AG04449 (cell line): ENCODE measurements at regions of chr12 and their contacts with region 1.

Region 1: GRCh38 chr12:76621582-76622024 is 62.0 kb upstream of the OSBPL8 start:
- DNase-seq: no peak
- H3K4me3 ChIP-seq: no peak overlapping the region
- CTCF ChIP-seq: peak; percentile 75

Region 2: DNA sequence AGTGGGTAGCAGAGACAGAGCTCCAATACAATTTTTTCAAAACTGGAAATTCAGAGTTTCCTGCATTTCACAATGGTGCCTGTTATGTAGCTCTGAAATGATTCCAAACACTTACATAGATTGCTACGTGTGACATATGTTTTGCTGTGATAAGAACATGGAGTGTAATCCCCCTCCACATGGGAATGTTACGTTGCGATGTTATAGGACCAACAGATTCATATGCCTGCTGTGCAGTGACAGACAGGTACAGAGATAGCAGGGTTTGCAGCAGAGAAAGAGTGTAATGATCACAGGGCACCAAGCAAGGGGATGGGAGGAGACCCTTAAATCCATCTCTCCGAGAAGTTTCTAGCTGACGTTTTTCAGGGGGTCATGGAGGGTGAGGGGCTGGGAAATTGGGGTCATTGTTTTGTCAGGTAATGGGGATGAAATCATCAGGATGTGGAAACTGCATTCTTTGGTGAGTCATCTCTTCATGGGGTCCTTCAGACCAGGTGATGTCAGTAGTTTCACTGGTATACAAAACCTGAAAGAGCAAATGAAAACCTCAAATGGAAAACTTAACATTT is 14.6 kb after region 1 on chr12:
- CTCF ChIA-PET with region 1: interaction called, 13 read pairs
- POLR2A ChIA-PET with region 1: no interaction called
- DNase-seq: no peak
- H3K4me3 ChIP-seq: no peak overlapping the region
- CTCF ChIP-seq: no peak

Region 3: DNA sequence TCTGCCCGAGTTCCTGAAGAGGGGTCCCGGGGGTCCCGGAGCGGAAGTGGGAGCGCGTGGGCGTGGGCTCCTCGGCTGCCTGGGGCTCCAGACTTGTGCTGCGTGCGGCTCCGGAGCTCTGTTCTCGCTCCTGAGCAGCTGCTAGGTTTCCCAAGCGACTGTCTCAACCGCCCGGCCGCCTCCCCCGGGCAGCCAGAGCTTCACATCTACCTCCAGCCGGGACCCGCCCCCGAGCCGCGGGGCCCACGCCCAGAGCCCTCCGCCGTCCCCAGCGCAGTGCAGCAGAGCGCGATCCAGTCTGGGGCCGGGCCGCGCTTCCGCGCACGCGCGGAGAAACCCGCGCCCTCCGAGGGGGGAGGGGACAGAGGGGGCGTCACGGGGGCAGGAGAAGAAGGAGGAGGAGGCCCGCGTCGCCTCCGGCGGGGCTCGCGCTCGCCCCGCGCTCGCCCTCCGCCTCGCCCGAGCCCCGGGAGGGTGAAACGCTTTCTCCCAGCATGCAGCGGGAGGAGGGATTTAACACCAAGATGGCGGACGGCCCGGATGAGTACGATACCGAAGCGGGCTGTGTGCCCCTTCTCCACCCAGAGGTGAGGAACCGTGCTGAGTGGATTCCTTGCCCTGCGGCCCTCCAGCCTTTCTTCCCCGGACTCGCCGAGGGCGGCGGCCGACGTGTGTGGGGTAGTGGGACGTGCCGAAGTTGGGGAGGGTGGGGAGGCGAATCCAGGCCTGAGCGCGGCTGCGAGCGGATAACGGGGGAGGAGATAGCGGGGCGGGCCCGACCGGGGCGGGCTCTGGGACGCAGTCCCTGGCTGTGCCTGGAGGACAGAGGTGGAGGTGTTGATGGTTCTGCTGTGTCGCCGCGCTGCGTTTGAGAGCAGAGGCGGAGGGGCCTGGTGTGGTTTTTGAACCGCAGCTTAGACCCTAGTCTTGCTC is 142.4 kb after region 1 on chr12 and contains the start of gene ZDHHC17:
- CTCF ChIA-PET with region 1: interaction called, 13 read pairs
- POLR2A ChIA-PET with region 1: interaction called, 5 read pairs
- DNase-seq: peak; percentile 51
- H3K4me3 ChIP-seq: peak within 1 kb of the TSS; percentile 95
- CTCF ChIP-seq: no peak

Region 4: GRCh38 chr12:76820888-76821482 is 199.4 kb after region 1 on chr12:
- CTCF ChIA-PET with region 1: interaction called, 27 read pairs
- POLR2A ChIA-PET with region 1: no interaction called
- DNase-seq: no peak
- H3K4me3 ChIP-seq: no peak overlapping the region
- CTCF ChIP-seq: peak; percentile 72